Activated CD4-positive, alpha-beta T cell treated with anti-CD3 and anti-CD28 coated beads, Interleukin-2, amount 10 ng/mL, durations not matched to agents 7 days and 5 days (primary cell): ENCODE measurements at regions of chr17 and their contacts with region 1.

Region 1: DNA sequence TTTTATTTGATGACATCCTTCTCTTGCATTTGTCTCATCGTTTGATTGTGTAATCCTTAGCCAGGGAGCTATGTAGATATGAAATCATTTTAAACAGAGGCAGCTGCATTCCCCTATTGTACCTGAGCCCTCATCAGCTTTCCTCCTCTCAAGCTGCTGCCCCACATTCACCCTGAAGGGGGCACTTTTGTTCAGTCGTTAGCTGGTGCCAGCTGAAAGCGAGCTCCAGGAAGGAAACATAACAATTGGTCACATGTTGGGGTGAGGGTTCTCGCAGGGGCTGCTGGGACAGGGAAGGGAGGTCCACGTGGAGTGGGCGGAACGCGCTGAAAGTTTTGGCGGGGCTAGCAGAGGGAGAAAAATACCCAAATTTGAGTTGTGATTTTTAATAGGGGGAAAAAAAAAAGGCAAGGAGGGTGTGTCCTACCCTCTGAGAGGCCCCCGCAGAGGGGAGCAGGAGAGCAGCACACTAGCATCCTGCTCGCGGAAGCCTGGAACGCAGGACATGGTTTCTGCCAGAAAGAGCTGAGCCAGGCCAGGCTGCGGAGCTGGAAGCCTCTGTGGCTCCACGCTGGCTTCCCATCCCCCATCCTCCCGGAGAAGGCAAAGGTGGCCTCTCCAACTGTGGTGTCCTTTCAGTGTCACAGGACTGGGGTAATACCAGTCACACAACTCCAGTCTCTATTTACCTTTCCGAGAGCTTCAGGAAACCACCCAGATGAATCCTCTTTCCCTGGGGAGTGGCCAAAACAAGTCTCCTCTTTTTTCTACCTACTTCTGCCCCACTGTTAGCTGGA is 8.5 kb upstream of the MSL1 start:
- DNase-seq: peak; percentile 96
- H3K4me3 Mint-ChIP-seq: peak overlapping the region; percentile 74
- H3K27ac Mint-ChIP-seq: peak overlapping the region; percentile 79
- H3K4me1 Mint-ChIP-seq: peaks cover 55% of the 10 kb centered on the region
- H3K27me3 Mint-ChIP-seq: no peaks in the 10 kb centered on the region

Region 2: DNA sequence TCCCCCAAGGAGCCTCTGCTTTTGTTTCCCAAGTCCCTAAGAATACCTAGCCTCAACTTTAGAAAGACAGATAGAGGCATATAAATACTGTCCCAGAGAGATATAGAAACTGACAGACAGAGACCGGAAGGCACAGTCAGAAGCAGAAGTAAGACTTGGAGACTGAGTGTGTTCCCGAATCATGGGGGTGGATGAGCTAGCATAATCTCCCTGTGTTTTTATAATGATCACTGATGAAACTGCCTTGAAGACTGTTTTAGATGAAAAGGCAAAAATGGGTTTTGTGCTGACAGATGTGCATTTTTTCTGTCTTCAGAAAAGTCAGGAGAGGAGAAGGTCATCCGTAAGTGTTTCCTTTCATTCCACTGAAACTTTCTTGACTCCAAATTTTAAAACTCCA is 141.0 kb before region 1 on chr17:
- CTCF ChIA-PET with region 1: no interaction called
- POLR2A ChIA-PET with region 1: no interaction called
- DNase-seq: no peak
- H3K4me3 Mint-ChIP-seq: no peak overlapping the region
- H3K27ac Mint-ChIP-seq: no peak overlapping the region
- H3K4me1 Mint-ChIP-seq: no peaks in the 10 kb centered on the region
- H3K27me3 Mint-ChIP-seq: peaks cover 34% of the 10 kb centered on the region

Region 3: GRCh38 chr17:40062329-40063186 is 50.8 kb before region 1 on chr17 and contains the start of gene THRA:
- CTCF ChIA-PET with region 1: interaction called, 12 read pairs
- POLR2A ChIA-PET with region 1: no interaction called
- DNase-seq: peak; percentile 65
- H3K4me3 Mint-ChIP-seq: peak within 1 kb of the TSS; percentile 81
- H3K27ac Mint-ChIP-seq: peak within 1 kb of the TSS; percentile 41
- H3K4me1 Mint-ChIP-seq: peaks cover 41% of the 10 kb centered on the region
- H3K27me3 Mint-ChIP-seq: peaks cover 40% of the 10 kb centered on the region
- total RNA-seq, gene THRA: 8.6 to 9.1 TPM

Region 4: DNA sequence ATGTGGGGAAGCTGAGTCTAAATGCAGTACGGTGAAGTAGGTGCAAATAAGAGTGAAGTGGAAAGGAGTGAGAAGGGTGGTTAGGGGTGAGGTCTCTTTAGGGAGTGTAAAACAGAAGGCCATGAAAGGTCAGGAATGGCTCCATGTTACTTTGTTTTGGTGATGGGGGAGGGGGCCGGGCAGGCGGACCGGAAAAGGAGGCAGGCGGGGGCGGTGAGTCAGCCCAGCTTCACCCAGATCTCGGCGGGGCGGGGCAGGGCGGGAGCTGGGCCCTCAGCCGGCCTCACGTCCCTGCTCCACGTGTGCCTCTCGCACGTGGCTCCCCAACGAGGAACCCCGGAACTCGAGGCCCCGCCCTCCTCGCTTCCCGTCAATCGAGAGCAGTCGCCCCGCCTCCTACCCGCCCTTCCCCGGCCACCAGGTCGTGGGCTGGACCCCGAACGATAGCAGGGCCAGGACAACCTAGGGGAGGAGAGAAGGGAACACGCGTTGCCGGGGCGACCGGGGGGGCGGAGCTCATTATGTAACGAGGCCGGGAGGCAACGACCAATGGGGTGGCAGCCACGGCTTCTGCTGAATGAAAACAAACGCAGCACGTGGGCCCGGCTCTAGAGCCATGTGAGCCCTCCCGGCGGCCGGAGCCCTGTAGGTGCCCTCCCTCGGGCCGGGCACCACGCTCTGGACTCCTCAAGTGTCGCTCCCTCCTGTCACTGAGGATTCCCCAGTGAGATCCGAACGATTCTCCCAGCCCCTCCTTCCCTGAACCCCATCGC is 14.3 kb before region 1 on chr17:
- CTCF ChIA-PET with region 1: interaction called, 97 read pairs
- POLR2A ChIA-PET with region 1: interaction called, 3 read pairs
- DNase-seq: peak; percentile 96
- H3K4me3 Mint-ChIP-seq: peak overlapping the region; percentile 82
- H3K27ac Mint-ChIP-seq: peak overlapping the region; percentile 91
- H3K4me1 Mint-ChIP-seq: peaks cover 87% of the 10 kb centered on the region
- H3K27me3 Mint-ChIP-seq: no peaks in the 10 kb centered on the region

Region 5: GRCh38 chr17:40139566-40140058 is 26.3 kb after region 1 on chr17:
- CTCF ChIA-PET with region 1: interaction called, 15 read pairs
- POLR2A ChIA-PET with region 1: no interaction called
- DNase-seq: no peak
- H3K4me3 Mint-ChIP-seq: peak overlapping the region; percentile 98
- H3K27ac Mint-ChIP-seq: peak overlapping the region; percentile 96
- H3K4me1 Mint-ChIP-seq: peaks cover 42% of the 10 kb centered on the region
- H3K27me3 Mint-ChIP-seq: no peaks in the 10 kb centered on the region

Region 6: GRCh38 chr17:40191237-40192208 is 78.2 kb after region 1 on chr17:
- CTCF ChIA-PET with region 1: interaction called, 14 read pairs
- POLR2A ChIA-PET with region 1: no interaction called
- DNase-seq: peak; percentile 70
- H3K4me3 Mint-ChIP-seq: peak overlapping the region; percentile 89
- H3K27ac Mint-ChIP-seq: peak overlapping the region; percentile 41
- H3K4me1 Mint-ChIP-seq: peaks cover 27% of the 10 kb centered on the region
- H3K27me3 Mint-ChIP-seq: peaks cover 8% of the 10 kb centered on the region